ENCODE measurements at regions of chr3 and their contacts with region 1.

Region 1: DNA sequence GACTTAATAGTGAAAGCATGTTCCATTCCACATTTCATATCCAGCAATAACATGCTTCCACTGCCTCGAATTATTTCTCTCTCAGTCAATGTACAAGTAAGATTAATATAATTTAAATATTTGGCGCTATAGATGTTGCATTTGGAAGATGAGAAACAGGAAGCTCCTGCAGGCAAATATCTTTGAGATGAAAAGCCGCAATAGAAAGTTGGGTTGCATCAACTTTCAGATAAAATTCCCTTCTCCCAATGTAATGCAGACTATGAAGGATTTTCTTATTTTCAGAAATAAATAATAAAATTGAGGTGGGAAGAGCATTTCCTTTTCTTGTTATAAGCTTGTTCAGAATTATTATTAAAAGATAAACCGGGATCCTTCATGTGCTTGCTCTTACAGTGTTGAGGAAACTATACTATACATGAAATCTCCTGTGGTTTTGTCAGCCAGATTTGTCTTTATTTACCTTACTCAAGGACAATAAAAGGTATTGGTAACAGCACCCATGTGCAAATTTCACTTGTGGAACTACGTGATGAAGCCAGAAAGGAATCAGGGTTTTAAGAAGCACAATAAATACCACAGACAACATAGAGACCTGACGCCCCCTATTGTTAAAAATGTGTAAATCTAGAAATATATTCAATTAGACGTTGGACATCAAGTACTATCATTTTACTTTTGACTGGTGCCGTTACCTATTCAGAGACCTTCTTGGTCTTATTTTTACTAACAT is 307.0 kb downstream of the ARPP21 start:
- DNase-seq: peak; percentile 68
- ATAC-seq: peak; percentile 18
- H3K4me3 ChIP-seq: no peak overlapping the region
- H3K27ac ChIP-seq: peak overlapping the region; percentile 86
- H3K4me1 ChIP-seq: peaks cover 34% of the 10 kb centered on the region
- H3K27me3 ChIP-seq: no peaks in the 10 kb centered on the region
- CTCF ChIP-seq: peak; percentile 76

Region 2: GRCh38 chr3:35894735-35895134 is 51.6 kb before region 1 on chr3:
- CTCF ChIA-PET with region 1: no interaction called
- POLR2A ChIA-PET with region 1: no interaction called
- intact Hi-C with region 1: no loop called
- DNase-seq: peak; percentile 8
- ATAC-seq: no peak
- H3K4me3 ChIP-seq: no peak overlapping the region
- H3K27ac ChIP-seq: no peak overlapping the region
- H3K4me1 ChIP-seq: no peaks in the 10 kb centered on the region
- H3K27me3 ChIP-seq: 0 out of 2 replicates have a peak, but pooled peaks cover 6% of the 10 kb centered on the region
- CTCF ChIP-seq: no peak

Region 3: GRCh38 chr3:35932995-35933394 is 13.3 kb before region 1 on chr3:
- CTCF ChIA-PET with region 1: no interaction called
- POLR2A ChIA-PET with region 1: no interaction called
- intact Hi-C with region 1: loop called (anchors 1 kb)
- DNase-seq: peak; percentile 98
- ATAC-seq: peak; percentile 85
- H3K4me3 ChIP-seq: no peak overlapping the region
- H3K27ac ChIP-seq: peak overlapping the region; percentile 66
- H3K4me1 ChIP-seq: peaks cover 41% of the 10 kb centered on the region
- H3K27me3 ChIP-seq: no peaks in the 10 kb centered on the region
- CTCF ChIP-seq: no peak

Region 4: DNA sequence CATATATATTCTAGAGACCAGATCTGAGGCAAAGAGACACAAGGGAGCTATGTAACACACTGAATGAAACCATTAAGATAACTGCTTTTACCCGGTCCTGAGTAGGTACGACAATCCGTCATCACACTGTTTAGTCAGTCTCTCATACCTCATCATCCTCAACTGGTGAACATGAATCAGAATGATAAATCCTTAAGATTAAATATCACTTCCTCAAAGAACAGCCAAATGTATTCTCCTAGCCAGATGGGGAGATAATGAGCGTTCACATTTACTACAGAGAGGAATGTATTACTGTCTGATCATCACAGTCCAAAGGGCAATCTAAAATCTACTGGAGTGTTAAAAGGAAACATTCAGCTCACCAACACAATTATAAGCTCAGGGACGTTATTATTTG is 114.7 kb after region 1 on chr3:
- CTCF ChIA-PET with region 1: no interaction called
- POLR2A ChIA-PET with region 1: interaction called, 4 read pairs
- intact Hi-C with region 1: loop called (anchors 1 kb)
- DNase-seq: peak; percentile 88
- ATAC-seq: peak; percentile 47
- H3K4me3 ChIP-seq: no peak overlapping the region
- H3K27ac ChIP-seq: peak overlapping the region; percentile 73
- H3K4me1 ChIP-seq: peaks cover 52% of the 10 kb centered on the region
- H3K27me3 ChIP-seq: no peaks in the 10 kb centered on the region
- CTCF ChIP-seq: no peak